CD8-positive, alpha-beta memory T cell (primary cell): ENCODE measurements at regions of chr17 and their contacts with region 1.

Region 1: DNA sequence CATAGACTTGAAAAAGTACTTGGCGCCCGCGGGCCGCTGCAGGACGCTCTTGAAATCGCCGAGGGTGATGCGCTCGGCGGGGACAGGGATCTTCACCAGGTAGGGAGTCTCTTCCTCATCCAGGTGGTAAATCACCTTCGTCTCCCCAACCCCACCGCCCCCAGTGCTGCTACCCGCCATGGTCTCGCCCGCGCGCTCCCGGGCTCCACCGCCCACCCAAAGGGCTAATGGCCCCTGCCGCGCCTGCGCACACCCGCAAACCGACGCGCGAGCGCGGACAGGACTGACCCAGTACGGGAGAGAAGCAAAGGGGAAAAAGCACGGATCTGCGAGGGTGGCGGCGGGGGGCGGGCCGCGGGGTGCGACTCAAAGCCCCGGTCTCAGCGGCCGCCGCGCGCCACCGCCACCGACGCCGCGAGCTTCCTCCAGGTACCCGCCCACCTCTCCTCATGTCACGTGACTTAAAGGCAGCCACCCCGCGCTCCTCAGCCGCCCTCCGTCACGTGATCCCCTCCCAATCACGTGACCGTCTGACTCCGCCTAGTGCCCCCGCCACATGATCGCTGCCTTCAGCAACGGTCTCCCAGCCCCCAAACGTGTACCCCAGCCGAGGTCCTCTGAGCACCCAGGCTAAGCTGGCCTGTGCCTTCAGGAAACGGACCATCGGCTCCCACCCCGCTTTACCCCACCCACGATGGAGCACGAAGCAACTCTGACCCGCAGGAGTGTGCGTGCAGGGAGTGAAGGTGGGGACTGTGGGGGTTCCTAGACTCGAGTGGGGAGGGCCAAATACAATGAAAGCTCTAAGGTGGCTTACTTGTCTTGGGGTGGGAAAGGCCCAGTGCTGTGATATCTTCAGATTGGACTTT is at the start of gene DVL2:
- DNase-seq: peak; percentile 93 to 97 (median 93)
- H3K4me3 ChIP-seq: peak within 1 kb of the TSS; percentile 85
- H3K4me3 Mint-ChIP-seq: peak within 1 kb of the TSS; percentile 92 to 97 (median 95)
- H3K27ac ChIP-seq: peak within 1 kb of the TSS; percentile 76
- H3K27ac Mint-ChIP-seq: peak within 1 kb of the TSS; percentile 90 to 99 (median 94)
- H3K4me1 ChIP-seq: peaks cover 35% of the 10 kb centered on the region
- H3K4me1 Mint-ChIP-seq: peaks cover 38 to 58% (median 46%) of the 10 kb centered on the region in 3 donors
- H3K27me3 ChIP-seq: no peaks in the 10 kb centered on the region
- H3K27me3 Mint-ChIP-seq: no peaks in the 10 kb centered on the region
- total RNA-seq, gene DVL2: 61.8 to 65.5 TPM

Region 2: GRCh38 chr17:7021993-7022778 is 212.1 kb before region 1 on chr17:
- CTCF ChIA-PET with region 1: no interaction called
- POLR2A ChIA-PET with region 1: no interaction called
- DNase-seq: peak; percentile 71 to 81 (median 74)
- H3K4me3 ChIP-seq: peak overlapping the region; percentile 42
- H3K4me3 Mint-ChIP-seq: peak overlapping the region; percentile 37 to 75 (median 57)
- H3K27ac ChIP-seq: no peak overlapping the region
- H3K27ac Mint-ChIP-seq: peak overlapping the region; percentile 19 to 95 (median 88)
- H3K4me1 ChIP-seq: peaks cover 33% of the 10 kb centered on the region
- H3K4me1 Mint-ChIP-seq: peaks cover 45 to 53% (median 47%) of the 10 kb centered on the region in 3 donors
- H3K27me3 ChIP-seq: no peaks in the 10 kb centered on the region
- H3K27me3 Mint-ChIP-seq: peaks cover 0 to 5% of the 10 kb centered on the region in 2 donors

Region 3: GRCh38 chr17:7156342-7156940 is 77.9 kb before region 1 on chr17:
- CTCF ChIA-PET with region 1: no interaction called
- POLR2A ChIA-PET with region 1: no interaction called
- DNase-seq: no peak
- H3K4me3 ChIP-seq: no peak overlapping the region
- H3K4me3 Mint-ChIP-seq: no peak overlapping the region
- H3K27ac ChIP-seq: no peak overlapping the region
- H3K27ac Mint-ChIP-seq: peak overlapping the region in 2 of 8 donors; percentile 27 to 87
- H3K4me1 ChIP-seq: no peaks in the 10 kb centered on the region
- H3K4me1 Mint-ChIP-seq: no peaks in the 10 kb centered on the region
- H3K27me3 ChIP-seq: no peaks in the 10 kb centered on the region
- H3K27me3 Mint-ChIP-seq: peaks cover 17 to 49% of the 10 kb centered on the region in 2 donors

Region 4: GRCh38 chr17:7214300-7215135 is 19.8 kb before region 1 on chr17:
- CTCF ChIA-PET with region 1: interaction called, 20 read pairs
- POLR2A ChIA-PET with region 1: interaction called, 31 read pairs
- DNase-seq: peak; percentile 97 to 99 (median 98)
- H3K4me3 ChIP-seq: peak overlapping the region; percentile 64
- H3K4me3 Mint-ChIP-seq: peak overlapping the region; percentile 81 to 96 (median 85)
- H3K27ac ChIP-seq: peak overlapping the region; percentile 83
- H3K27ac Mint-ChIP-seq: peak overlapping the region; percentile 91 to 100 (median 98)
- H3K4me1 ChIP-seq: peaks cover 51% of the 10 kb centered on the region
- H3K4me1 Mint-ChIP-seq: peaks cover 39 to 58% (median 51%) of the 10 kb centered on the region in 3 donors
- H3K27me3 ChIP-seq: no peaks in the 10 kb centered on the region
- H3K27me3 Mint-ChIP-seq: peaks cover 9 to 13% of the 10 kb centered on the region in 2 donors

Region 5: DNA sequence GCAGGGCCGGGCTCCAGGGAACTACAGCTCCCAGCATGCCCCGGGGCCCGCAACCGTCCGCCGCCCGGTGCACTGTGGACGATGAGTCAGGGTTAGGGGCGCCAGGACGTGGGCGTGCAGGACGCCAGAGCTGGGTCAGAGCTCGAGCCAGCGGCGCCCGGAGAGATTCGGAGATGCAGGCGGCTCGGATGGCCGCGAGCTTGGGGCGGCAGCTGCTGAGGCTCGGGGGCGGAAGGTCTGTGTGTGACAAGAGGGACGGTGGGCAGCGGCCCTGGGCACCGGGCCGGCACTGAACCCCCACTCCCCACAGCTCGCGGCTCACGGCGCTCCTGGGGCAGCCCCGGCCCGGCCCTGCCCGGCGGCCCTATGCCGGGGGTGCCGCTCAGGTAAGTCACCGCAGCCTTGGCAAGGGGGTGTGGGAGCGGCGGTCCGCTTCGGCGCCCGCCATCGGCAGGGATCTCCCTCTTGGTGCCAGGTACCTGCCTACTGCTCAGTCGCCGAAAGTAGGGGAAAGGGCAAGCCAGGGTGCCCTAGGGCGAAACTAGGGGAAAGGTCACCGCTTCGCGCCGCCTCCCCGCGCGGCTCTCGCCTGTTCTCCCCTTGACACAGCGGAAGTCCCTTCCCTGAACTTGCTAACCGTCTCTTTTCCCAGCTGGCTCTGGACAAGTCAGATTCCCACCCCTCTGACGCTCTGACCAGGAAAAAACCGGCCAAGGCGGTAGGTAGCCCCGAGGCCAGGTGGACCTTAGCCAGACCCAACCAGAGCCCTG is 14.3 kb before region 1 on chr17 and contains the starts of genes ACADVL and DLG4:
- CTCF ChIA-PET with region 1: interaction called, 20 read pairs
- POLR2A ChIA-PET with region 1: interaction called, 31 read pairs
- DNase-seq: peak; percentile 65 to 86 (median 70)
- H3K4me3 ChIP-seq: peak within 1 kb of the TSS; percentile 67
- H3K4me3 Mint-ChIP-seq: peak within 1 kb of the TSS; percentile 74 to 96 (median 93)
- H3K27ac ChIP-seq: peak within 1 kb of the TSS; percentile 70
- H3K27ac Mint-ChIP-seq: peak within 1 kb of the TSS; percentile 81 to 100 (median 98)
- H3K4me1 ChIP-seq: peaks cover 54% of the 10 kb centered on the region
- H3K4me1 Mint-ChIP-seq: peaks cover 35 to 62% (median 46%) of the 10 kb centered on the region in 3 donors
- H3K27me3 ChIP-seq: no peaks in the 10 kb centered on the region
- H3K27me3 Mint-ChIP-seq: no peaks in the 10 kb centered on the region
- total RNA-seq, gene ACADVL: 281 to 288 TPM
- total RNA-seq, gene DLG4: 3.5 to 4.4 TPM

Region 6: DNA sequence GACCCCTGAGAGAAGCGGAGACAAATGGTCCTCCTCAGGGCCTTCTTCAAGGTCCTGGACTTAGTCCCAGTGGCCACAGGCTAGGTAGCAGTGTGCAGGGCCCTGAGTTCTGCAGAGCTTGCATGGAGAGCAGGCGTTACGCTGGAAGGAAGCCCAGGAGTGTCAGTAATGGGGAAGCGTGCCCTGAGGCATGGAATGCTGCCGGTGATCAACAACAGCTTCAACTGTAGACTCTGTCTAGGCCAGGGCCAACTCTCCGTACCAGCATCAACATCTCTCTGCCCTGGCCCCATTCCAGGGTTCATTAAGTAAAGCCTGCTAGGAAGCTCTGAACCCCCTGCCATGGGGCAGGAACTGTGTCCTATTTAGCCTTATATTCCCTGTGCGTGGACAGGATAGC is 146.0 kb after region 1 on chr17:
- CTCF ChIA-PET with region 1: no interaction called
- POLR2A ChIA-PET with region 1: no interaction called
- DNase-seq: no peak
- H3K4me3 ChIP-seq: no peak overlapping the region
- H3K4me3 Mint-ChIP-seq: no peak overlapping the region
- H3K27ac ChIP-seq: no peak overlapping the region
- H3K27ac Mint-ChIP-seq: peak overlapping the region in 1 of 8 donors; percentile 20
- H3K4me1 ChIP-seq: peaks cover 13% of the 10 kb centered on the region
- H3K4me1 Mint-ChIP-seq: peaks cover 12 to 16% (median 15%) of the 10 kb centered on the region in 3 donors
- H3K27me3 ChIP-seq: peaks cover 16% of the 10 kb centered on the region
- H3K27me3 Mint-ChIP-seq: peaks cover 25 to 46% of the 10 kb centered on the region in 2 donors